HEK293 (cell line): ENCODE measurements at regions of chr5 and their contacts with region 1.

Region 1: DNA sequence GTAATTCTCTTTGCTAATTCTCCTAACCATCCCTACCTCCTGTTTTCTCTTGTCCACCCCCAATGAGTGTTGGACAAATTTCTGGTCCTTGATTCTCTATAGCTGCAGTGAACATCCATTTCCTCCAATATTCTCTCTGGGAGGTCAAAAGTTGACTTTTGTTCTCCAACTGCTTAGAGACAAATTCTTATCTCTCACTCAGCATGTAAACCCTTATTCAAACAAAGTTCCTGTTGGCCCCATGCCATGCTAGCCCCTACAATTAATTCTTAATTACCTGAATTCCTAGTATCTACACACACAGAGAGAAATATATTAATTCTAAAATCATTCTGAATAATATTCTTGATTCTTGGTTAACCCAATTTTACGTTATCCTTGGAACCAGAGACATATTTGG is 472.9 kb upstream of the ACTBL2 start:
- H3K4me3 ChIP-seq: no peak overlapping the region
- H3K27ac ChIP-seq: no peak overlapping the region
- H3K4me1 ChIP-seq: no peaks in the 10 kb centered on the region
- CTCF ChIP-seq: no peak

Region 2: GRCh38 chr5:57327561-57328394 is 627.7 kb before region 1 on chr5:
- CTCF ChIA-PET with region 1: interaction called, 10 read pairs
- POLR2A ChIA-PET with region 1: no interaction called
- H3K4me3 ChIP-seq: no peak overlapping the region
- H3K27ac ChIP-seq: no peak overlapping the region
- H3K4me1 ChIP-seq: no peaks in the 10 kb centered on the region
- CTCF ChIP-seq: no peak

Region 3: GRCh38 chr5:57986761-57987341 is 31.3 kb after region 1 on chr5:
- CTCF ChIA-PET with region 1: no interaction called
- POLR2A ChIA-PET with region 1: no interaction called
- H3K4me3 ChIP-seq: no peak overlapping the region
- H3K27ac ChIP-seq: no peak overlapping the region
- H3K4me1 ChIP-seq: no peaks in the 10 kb centered on the region
- CTCF ChIP-seq: no peak